T-cell (primary cell): ENCODE measurements at regions of chr18 and their contacts with region 1.

Region 1: GRCh38 chr18:67104700-67105284 is 411.7 kb downstream of the DSEL start:
- DNase-seq: peak in 18 of 35 experiments; percentile 1 to 46 (median 8)
- ATAC-seq: peak in 1 of 4 experiments; percentile 48
- H3K4me3 ChIP-seq: no peak overlapping the region
- H3K4me3 Mint-ChIP-seq: no peak overlapping the region
- H3K27ac ChIP-seq: no peak overlapping the region
- H3K27ac Mint-ChIP-seq: no peak overlapping the region
- H3K4me1 ChIP-seq: no peaks in the 10 kb centered on the region
- H3K4me1 Mint-ChIP-seq: no peaks in the 10 kb centered on the region
- H3K27me3 ChIP-seq: no peaks in the 10 kb centered on the region
- H3K27me3 Mint-ChIP-seq: no peaks in the 10 kb centered on the region

Region 2: DNA sequence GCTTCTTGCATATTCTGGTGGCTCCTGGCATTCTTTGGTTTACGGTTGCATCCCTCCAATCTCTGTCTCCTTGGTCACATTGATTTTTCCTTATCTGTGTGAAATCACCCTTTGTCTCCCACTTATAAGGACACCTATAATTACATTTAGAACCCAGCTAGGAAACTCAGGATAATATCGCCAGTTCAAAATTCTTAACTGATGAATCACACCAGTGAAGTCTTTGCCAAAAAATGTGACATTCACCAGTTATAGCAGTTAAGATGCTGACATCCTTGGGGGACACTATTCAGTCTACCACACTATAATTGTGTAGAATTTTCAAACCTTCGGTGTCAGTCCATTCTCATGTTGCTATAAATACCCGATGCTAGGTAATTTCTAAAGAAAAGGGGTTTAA is 1289.9 kb after region 1 on chr18:
- CTCF ChIA-PET with region 1: interaction called in 1 of 2 experiments, 10 read pairs
- POLR2A ChIA-PET with region 1: no interaction called
- DNase-seq: no peak
- ATAC-seq: no peak
- H3K4me3 ChIP-seq: no peak overlapping the region
- H3K4me3 Mint-ChIP-seq: no peak overlapping the region
- H3K27ac ChIP-seq: no peak overlapping the region
- H3K27ac Mint-ChIP-seq: no peak overlapping the region
- H3K4me1 ChIP-seq: no peaks in the 10 kb centered on the region
- H3K4me1 Mint-ChIP-seq: no peaks in the 10 kb centered on the region
- H3K27me3 ChIP-seq: no peaks in the 10 kb centered on the region
- H3K27me3 Mint-ChIP-seq: no peaks in the 10 kb centered on the region